H1 (cell line): ENCODE measurements at regions of chr1 and their contacts with region 1.

Region 1: GRCh38 chr1:11645670-11646265 is 8.5 kb downstream of the FBXO2 start:
- DNase-seq: peak in 1 of 2 experiments; percentile 95
- H3K4me3 ChIP-seq: no peak overlapping the region
- H3K27ac ChIP-seq: no peak overlapping the region
- H3K4me1 ChIP-seq: peaks cover under 1 to 16% (median 14%) of the 10 kb centered on the region in 4 experiments
- H3K27me3 ChIP-seq: no peaks in the 10 kb centered on the region
- CTCF ChIP-seq: peak in 2 of 3 experiments; percentile 82 to 85; a peak in 3 of 4 replicates
- EP300 ChIP-seq: no peak
- POLR2A ChIP-seq: no peak
- RAD21 ChIP-seq: peak; percentile 83 to 85

Region 2: GRCh38 chr1:11248155-11248554 is 397.6 kb before region 1 on chr1:
- CTCF ChIA-PET with region 1: interaction called, 56 read pairs
- POLR2A ChIA-PET with region 1: no interaction called
- DNase-seq: no peak
- H3K4me3 ChIP-seq: no peak overlapping the region
- H3K27ac ChIP-seq: no peak overlapping the region
- H3K4me1 ChIP-seq: no peaks in the 10 kb centered on the region
- H3K27me3 ChIP-seq: no peaks in the 10 kb centered on the region
- CTCF ChIP-seq: no peak
- EP300 ChIP-seq: no peak
- POLR2A ChIP-seq: no peak
- RAD21 ChIP-seq: no peak; a peak in 1 of 4 replicates

Region 3: GRCh38 chr1:11478571-11479374 is 167.0 kb before region 1 on chr1 and contains the start of gene DISP3:
- CTCF ChIA-PET with region 1: interaction called, 34 read pairs
- POLR2A ChIA-PET with region 1: interaction called, 9 read pairs
- DNase-seq: peak; percentile 56 to 96
- H3K4me3 ChIP-seq: peak within 1 kb of the TSS; percentile 63 to 75 (median 70)
- H3K27ac ChIP-seq: peak within 1 kb of the TSS; percentile 99
- H3K4me1 ChIP-seq: peaks cover 0 to 4% (median 0%) of the 10 kb centered on the region in 4 experiments; a peak in 2 of 7 replicates
- H3K27me3 ChIP-seq: peaks cover 3 to 26% (median 24%) of the 10 kb centered on the region in 4 experiments
- CTCF ChIP-seq: peak; percentile 68 to 75 (median 73)
- EP300 ChIP-seq: peak in 1 of 2 experiments; percentile 99; a peak in 2 of 3 replicates
- POLR2A ChIP-seq: peak in 1 of 2 experiments; percentile 96; a peak in 2 of 3 replicates
- RAD21 ChIP-seq: peak; percentile 46 to 65
- total RNA-seq, gene DISP3: 4.6 and 5.3 TPM in 2 replicates

Region 4: DNA sequence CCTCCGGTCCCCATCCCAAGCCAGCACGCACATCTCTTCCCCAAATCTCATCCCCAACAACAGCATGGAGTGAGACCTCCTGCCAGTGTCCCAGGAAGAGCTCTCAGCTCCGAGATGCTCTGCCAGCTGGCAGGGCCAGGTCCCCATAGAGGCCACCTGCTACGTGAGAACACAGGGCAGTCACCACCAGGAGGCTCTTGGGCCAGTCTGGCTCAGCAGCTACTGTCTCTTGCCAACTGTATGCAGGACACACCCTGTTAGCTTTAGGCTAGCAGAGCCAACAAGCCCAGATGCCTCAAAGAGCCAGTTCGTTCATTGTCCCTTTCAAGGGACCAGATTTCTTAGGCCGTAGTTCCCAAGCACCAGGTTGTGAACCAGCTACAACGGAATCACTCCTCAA is 28.5 kb before region 1 on chr1:
- CTCF ChIA-PET with region 1: interaction called, 15 read pairs
- POLR2A ChIA-PET with region 1: no interaction called
- DNase-seq: no peak
- H3K4me3 ChIP-seq: no peak overlapping the region
- H3K27ac ChIP-seq: no peak overlapping the region
- H3K4me1 ChIP-seq: no peaks in the 10 kb centered on the region
- H3K27me3 ChIP-seq: peaks cover 0 to 2% (median 0%) of the 10 kb centered on the region in 4 experiments; a peak in 1 of 7 replicates
- CTCF ChIP-seq: peak in 2 of 3 experiments; percentile 21 to 22; a peak in 2 of 4 replicates
- EP300 ChIP-seq: no peak
- POLR2A ChIP-seq: no peak
- RAD21 ChIP-seq: peak in 1 of 2 experiments; percentile 29; a peak in 1 of 4 replicates

Region 5: GRCh38 chr1:11681071-11681771 is 35.5 kb after region 1 on chr1 and contains the start of gene MAD2L2:
- CTCF ChIA-PET with region 1: interaction called, 11 read pairs
- POLR2A ChIA-PET with region 1: interaction called, 3 read pairs
- DNase-seq: peak in 1 of 2 experiments; percentile 94
- H3K4me3 ChIP-seq: peak within 1 kb of the TSS; percentile 78 to 87 (median 84)
- H3K27ac ChIP-seq: peak within 1 kb of the TSS; percentile 93
- H3K4me1 ChIP-seq: peaks cover 13 to 38% (median 26%) of the 10 kb centered on the region in 4 experiments
- H3K27me3 ChIP-seq: no peaks in the 10 kb centered on the region
- CTCF ChIP-seq: no peak
- EP300 ChIP-seq: peak in 1 of 2 experiments; percentile 69; a peak in 1 of 3 replicates
- POLR2A ChIP-seq: peak in 1 of 2 experiments; percentile 17; a peak in 1 of 3 replicates
- RAD21 ChIP-seq: no peak
- total RNA-seq, gene MAD2L2: 310 and 314 TPM in 2 replicates

Region 6: DNA sequence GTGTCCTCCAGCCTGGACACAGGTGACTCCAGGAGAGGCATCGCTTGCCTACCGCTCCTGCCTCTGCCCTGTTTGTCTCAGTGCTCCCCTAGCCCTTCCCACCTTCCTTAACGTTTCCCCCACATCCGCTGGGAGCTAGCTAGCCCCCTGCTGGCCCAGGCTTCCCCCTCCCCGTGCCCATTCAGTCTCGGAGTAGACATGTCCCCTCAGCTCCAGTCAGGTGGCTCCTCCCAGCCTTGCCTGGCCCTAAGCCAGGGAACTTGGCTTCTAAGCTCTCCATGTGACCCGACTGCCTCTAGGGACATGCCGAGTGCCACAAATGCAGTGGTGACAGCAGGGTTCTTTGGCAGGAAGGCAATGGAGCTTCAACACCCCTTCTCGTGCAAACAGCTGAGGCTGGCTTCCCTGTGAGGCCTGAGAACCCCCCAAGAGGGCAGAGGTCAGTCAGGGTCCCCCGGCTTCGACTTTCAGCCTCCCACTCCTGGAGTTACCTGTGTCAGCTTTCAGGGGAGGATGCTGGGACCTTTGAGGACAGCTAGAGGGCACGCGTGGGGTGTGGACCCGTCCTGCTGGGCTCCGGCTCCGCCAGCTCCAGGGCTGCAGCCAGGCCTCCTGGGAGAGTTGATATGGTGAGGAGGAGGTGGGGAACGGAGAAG is 62.0 kb after region 1 on chr1:
- CTCF ChIA-PET with region 1: interaction called, 25 read pairs
- POLR2A ChIA-PET with region 1: interaction called, 4 read pairs
- DNase-seq: no peak
- H3K4me3 ChIP-seq: no peak overlapping the region
- H3K27ac ChIP-seq: no peak overlapping the region
- H3K4me1 ChIP-seq: peaks cover 7 to 36% (median 26%) of the 10 kb centered on the region in 4 experiments
- H3K27me3 ChIP-seq: no peaks in the 10 kb centered on the region
- CTCF ChIP-seq: no peak
- EP300 ChIP-seq: no peak
- POLR2A ChIP-seq: no peak
- RAD21 ChIP-seq: no peak